ENCODE measurements at regions of chr10 and their contacts with region 1.

Region 1: GRCh38 chr10:50527442-50528043 is 96.2 kb downstream of the SGMS1 start:
- DNase-seq: peak in 2 of 4 experiments; percentile 59 to 71
- ATAC-seq: peak; percentile 84
- H3K4me3 ChIP-seq: no peak overlapping the region
- H3K27ac ChIP-seq: peak overlapping the region; percentile 17; the same call in 1 of the 3 replicates
- H3K4me1 ChIP-seq: peaks cover 6 to 27% of the 10 kb centered on the region in 2 experiments
- H3K27me3 ChIP-seq: no peaks in the 10 kb centered on the region
- CTCF ChIP-seq: no peak
- EP300 ChIP-seq: no peak
- POLR2A ChIP-seq: no peak
- RAD21 ChIP-seq: peak; percentile 6 to 7; a peak in 1 of 4 replicates

Region 2: DNA sequence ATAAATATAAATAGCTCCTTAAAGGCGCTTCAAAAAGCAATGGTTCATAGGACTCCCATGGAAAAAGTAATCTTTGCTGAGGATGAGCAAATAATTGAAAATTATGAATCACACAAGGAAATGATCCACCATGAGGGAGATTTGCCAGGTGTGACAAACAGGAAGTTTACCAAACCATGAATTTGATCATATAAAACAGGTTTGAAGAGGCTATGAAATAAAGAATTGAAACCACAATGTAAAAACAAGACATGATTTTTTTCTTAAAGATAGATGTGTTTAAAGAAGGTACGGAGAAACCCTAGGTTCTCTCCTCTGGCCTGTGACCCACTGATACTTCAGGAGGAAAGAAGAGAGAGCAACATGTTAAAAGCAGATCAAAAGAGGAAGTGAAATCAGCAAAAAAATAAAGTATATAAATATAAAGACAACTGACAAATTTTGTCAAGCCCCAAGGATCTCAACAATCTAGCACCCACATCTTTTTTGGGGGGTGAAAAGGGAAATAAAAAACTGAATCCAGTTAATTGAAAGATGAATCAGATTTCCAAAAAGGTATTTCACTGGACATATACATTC is 164.9 kb before region 1 on chr10:
- CTCF ChIA-PET with region 1: no interaction called
- POLR2A ChIA-PET with region 1: interaction called, 10 read pairs
- in situ Hi-C with region 1: no loop called
- intact Hi-C with region 1: no loop called
- DNase-seq: no peak
- ATAC-seq: no peak
- H3K4me3 ChIP-seq: no peak overlapping the region
- H3K27ac ChIP-seq: peak overlapping the region; percentile 36; the same call in 2 of the 3 replicates
- H3K4me1 ChIP-seq: peaks cover 10 to 56% of the 10 kb centered on the region in 2 experiments
- H3K27me3 ChIP-seq: no peaks in the 10 kb centered on the region
- CTCF ChIP-seq: no peak
- EP300 ChIP-seq: no peak
- POLR2A ChIP-seq: no peak
- RAD21 ChIP-seq: no peak

Region 3: DNA sequence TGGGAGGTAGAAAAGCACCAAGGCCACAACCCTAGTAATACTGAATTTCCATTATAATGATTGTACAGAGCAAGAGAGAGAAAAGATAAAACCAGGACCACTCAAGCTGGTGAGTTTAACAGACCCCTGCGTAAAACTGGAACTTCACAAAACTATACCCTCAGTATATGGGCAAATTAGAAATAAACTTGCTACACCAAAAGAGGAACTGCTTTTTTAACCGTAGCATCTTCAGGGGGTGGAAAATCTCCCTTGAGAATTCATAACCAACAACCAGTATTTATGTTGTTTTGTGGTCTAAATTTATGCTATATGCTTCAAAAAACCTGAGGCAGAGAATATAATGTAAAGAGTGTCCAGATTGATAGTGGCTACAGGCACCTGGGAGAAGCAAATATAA is 74.9 kb before region 1 on chr10:
- CTCF ChIA-PET with region 1: no interaction called
- POLR2A ChIA-PET with region 1: no interaction called
- in situ Hi-C with region 1: no loop called
- intact Hi-C with region 1: no loop called
- DNase-seq: no peak
- ATAC-seq: no peak
- H3K4me3 ChIP-seq: no peak overlapping the region
- H3K27ac ChIP-seq: no peak overlapping the region
- H3K4me1 ChIP-seq: no peaks in the 10 kb centered on the region
- H3K27me3 ChIP-seq: no peaks in the 10 kb centered on the region
- CTCF ChIP-seq: no peak
- EP300 ChIP-seq: no peak
- POLR2A ChIP-seq: no peak
- RAD21 ChIP-seq: no peak

Region 4: GRCh38 chr10:50866317-50866716 is 338.8 kb after region 1 on chr10:
- CTCF ChIA-PET with region 1: no interaction called
- POLR2A ChIA-PET with region 1: no interaction called
- in situ Hi-C with region 1: no loop called
- intact Hi-C with region 1: no loop called
- DNase-seq: no peak
- ATAC-seq: no peak
- H3K4me3 ChIP-seq: no peak overlapping the region
- H3K27ac ChIP-seq: no peak overlapping the region
- H3K4me1 ChIP-seq: no peaks in the 10 kb centered on the region
- H3K27me3 ChIP-seq: no peaks in the 10 kb centered on the region
- CTCF ChIP-seq: no peak
- EP300 ChIP-seq: no peak
- POLR2A ChIP-seq: no peak
- RAD21 ChIP-seq: no peak

Region 5: GRCh38 chr10:51285601-51286000 is 758.1 kb after region 1 on chr10:
- CTCF ChIA-PET with region 1: no interaction called
- POLR2A ChIA-PET with region 1: no interaction called
- in situ Hi-C with region 1: no loop called
- intact Hi-C with region 1: no loop called
- DNase-seq: no peak
- ATAC-seq: no peak
- H3K4me3 ChIP-seq: no peak overlapping the region
- H3K27ac ChIP-seq: no peak overlapping the region
- H3K4me1 ChIP-seq: no peaks in the 10 kb centered on the region
- H3K27me3 ChIP-seq: no peaks in the 10 kb centered on the region
- CTCF ChIP-seq: no peak
- EP300 ChIP-seq: no peak
- POLR2A ChIP-seq: no peak
- RAD21 ChIP-seq: no peak